Activated CD4-positive, alpha-beta T cell treated with anti-CD3 and anti-CD28 coated beads, Interleukin-2, amount 10 ng/mL, durations not matched to agents 7 days and 5 days (primary cell): ENCODE measurements at regions of chr3 and their contacts with region 1.

Region 1: GRCh38 chr3:160003520-160004128 is 15.0 kb downstream of the IL12A start:
- DNase-seq: peak; percentile 46
- H3K4me3 Mint-ChIP-seq: no peak overlapping the region
- H3K27ac Mint-ChIP-seq: no peak overlapping the region
- H3K4me1 Mint-ChIP-seq: peaks cover 13% of the 10 kb centered on the region
- H3K27me3 Mint-ChIP-seq: no peaks in the 10 kb centered on the region

Region 2: DNA sequence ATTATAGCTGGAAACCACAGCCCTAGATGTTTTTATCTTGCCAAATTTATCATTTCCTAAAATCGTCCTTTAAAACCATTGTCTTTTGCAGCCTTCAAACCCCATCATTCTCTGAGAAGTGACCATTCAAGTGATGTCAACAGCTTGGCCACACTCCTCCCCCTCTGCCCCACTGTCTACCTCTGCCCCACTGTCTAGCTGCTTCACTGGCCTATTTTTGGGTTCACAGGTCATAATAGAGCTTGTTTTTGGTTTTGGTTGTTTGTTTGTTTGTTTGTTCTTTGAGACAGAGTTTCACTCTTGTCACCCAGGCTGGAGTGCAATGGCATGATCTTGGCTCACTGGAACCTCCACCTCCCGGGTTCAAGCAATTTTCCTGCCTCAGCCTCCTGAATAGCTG is 108.2 kb before region 1 on chr3:
- CTCF ChIA-PET with region 1: interaction called, 5 read pairs
- POLR2A ChIA-PET with region 1: interaction called, 11 read pairs
- DNase-seq: no peak
- H3K4me3 Mint-ChIP-seq: no peak overlapping the region
- H3K27ac Mint-ChIP-seq: no peak overlapping the region
- H3K4me1 Mint-ChIP-seq: no peaks in the 10 kb centered on the region
- H3K27me3 Mint-ChIP-seq: peaks cover 25% of the 10 kb centered on the region

Region 3: GRCh38 chr3:159919873-159920272 is 83.8 kb before region 1 on chr3:
- CTCF ChIA-PET with region 1: no interaction called
- POLR2A ChIA-PET with region 1: no interaction called
- DNase-seq: no peak
- H3K4me3 Mint-ChIP-seq: no peak overlapping the region
- H3K27ac Mint-ChIP-seq: no peak overlapping the region
- H3K4me1 Mint-ChIP-seq: no peaks in the 10 kb centered on the region
- H3K27me3 Mint-ChIP-seq: peaks cover 12% of the 10 kb centered on the region

Region 4: GRCh38 chr3:159977295-159977694 is 26.3 kb before region 1 on chr3:
- CTCF ChIA-PET with region 1: no interaction called
- POLR2A ChIA-PET with region 1: no interaction called
- DNase-seq: no peak
- H3K4me3 Mint-ChIP-seq: no peak overlapping the region
- H3K27ac Mint-ChIP-seq: no peak overlapping the region
- H3K4me1 Mint-ChIP-seq: no peaks in the 10 kb centered on the region
- H3K27me3 Mint-ChIP-seq: peaks cover 34% of the 10 kb centered on the region

Region 5: GRCh38 chr3:159988617-159989271 is 14.9 kb before region 1 on chr3 and contains the start of gene IL12A:
- CTCF ChIA-PET with region 1: interaction called, 68 read pairs
- POLR2A ChIA-PET with region 1: no interaction called
- DNase-seq: peak; percentile 84
- H3K4me3 Mint-ChIP-seq: peak within 1 kb of the TSS; percentile 74
- H3K27ac Mint-ChIP-seq: no peak within 1 kb of the TSS
- H3K4me1 Mint-ChIP-seq: peaks cover 17% of the 10 kb centered on the region
- H3K27me3 Mint-ChIP-seq: peaks cover 12% of the 10 kb centered on the region
- total RNA-seq, gene IL12A: 0.17 TPM in 1 of 2 experiments, not detected in the other

Region 6: DNA sequence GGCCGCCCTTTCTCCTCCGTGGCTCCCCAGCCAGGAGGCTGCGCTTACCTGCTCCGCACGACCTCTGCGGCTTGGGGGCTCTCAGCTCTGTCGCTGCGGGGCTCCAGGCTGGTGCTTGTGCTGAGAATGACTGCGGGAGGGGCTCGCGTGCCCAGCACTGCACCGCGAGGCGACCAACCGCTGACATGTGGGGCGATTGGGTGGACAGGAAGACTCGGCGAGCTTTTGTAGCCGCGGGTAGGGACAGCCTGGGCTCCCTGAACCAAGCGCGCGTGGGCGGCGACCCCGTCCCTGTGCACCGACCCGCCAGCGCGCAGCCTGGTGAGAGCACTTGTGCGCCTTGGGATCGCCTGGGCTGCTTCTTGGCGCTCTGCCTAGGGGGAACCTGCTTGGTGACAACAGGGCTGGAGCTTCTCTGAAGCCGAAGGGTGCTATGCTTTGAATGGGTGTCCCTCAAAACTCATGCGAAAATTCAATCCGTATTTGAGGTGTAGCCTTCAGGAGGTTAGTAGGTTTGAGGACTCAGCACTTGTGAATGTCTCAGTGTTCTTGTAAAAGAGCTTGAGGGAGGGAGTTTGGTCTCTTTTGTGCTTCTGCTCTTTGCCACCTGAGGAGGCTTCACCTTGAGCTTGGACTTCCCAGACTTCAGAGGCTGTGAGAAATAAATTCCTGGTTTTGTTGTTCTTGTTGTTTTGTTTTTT is 35.4 kb after region 1 on chr3:
- CTCF ChIA-PET with region 1: no interaction called
- POLR2A ChIA-PET with region 1: no interaction called
- DNase-seq: no peak
- H3K4me3 Mint-ChIP-seq: no peak overlapping the region
- H3K27ac Mint-ChIP-seq: no peak overlapping the region
- H3K4me1 Mint-ChIP-seq: peaks cover 7% of the 10 kb centered on the region
- H3K27me3 Mint-ChIP-seq: peaks cover 45% of the 10 kb centered on the region

Region 7: DNA sequence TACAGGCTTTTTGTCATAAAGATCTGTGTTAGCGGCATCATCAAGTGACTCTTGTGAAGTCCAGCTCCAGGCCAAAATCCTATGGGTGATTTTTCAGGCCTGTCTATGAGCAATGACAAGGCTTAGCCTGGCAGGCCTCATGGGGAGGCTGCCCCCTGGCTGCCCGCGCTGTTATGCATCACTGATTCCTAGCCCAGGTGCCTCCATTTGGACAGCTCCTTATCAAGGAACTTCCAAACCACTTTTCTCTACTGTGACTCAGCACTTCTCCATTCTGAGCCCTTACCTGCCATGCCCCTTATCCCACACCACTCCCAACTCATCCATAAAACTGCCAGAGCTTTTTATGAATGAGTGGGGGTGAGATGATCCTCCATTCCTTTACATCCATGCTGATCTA is 130.1 kb after region 1 on chr3:
- CTCF ChIA-PET with region 1: no interaction called
- POLR2A ChIA-PET with region 1: no interaction called
- DNase-seq: no peak
- H3K4me3 Mint-ChIP-seq: no peak overlapping the region
- H3K27ac Mint-ChIP-seq: no peak overlapping the region
- H3K4me1 Mint-ChIP-seq: peaks cover 3% of the 10 kb centered on the region
- H3K27me3 Mint-ChIP-seq: peaks cover 2% of the 10 kb centered on the region